ENCODE measurements at regions of chr12 and their contacts with region 1.

Region 1: DNA sequence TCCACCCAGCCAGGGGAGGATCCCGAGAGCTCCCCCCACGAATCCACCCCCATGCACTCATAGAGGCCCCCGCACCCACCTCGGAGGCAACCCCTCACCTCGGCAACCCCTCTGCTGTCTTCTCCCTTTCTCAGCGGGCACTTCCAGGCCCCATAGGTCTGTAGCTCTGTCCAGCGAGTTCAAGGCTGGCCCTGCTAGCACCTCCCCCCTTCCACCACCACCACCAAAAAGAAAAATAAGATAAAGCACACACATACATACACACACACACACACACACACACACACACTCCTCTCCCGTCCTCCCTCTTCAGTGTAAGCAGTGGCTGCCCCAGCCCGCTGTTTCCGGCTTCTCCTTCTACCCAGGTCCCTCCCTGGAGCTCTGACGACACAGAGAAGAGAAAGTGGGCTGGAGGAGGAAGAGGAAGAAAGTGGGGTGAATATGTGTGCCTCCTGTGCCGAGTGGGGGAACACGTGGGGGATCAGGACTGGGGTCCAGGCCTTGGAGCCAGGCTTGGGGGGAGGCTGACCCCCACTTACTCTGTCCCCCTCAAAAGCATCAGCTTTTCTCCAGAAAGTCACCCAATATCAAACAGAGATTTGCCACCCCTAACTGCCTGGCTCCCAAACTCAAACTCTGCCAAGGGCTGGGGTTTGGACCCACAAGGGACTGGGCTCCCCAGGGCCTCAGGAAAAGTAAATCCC is at the start of gene STAT6:
- DNase-seq: peak; percentile 53 to 94 (median 87)
- ATAC-seq: peak; percentile 77
- H3K4me3 ChIP-seq: peak within 1 kb of the TSS; percentile 75
- H3K4me3 Mint-ChIP-seq: peak within 1 kb of the TSS; percentile 89 to 100 (median 98)
- H3K27ac ChIP-seq: peak within 1 kb of the TSS; percentile 92
- H3K27ac Mint-ChIP-seq: peak within 1 kb of the TSS; percentile 93 to 100 (median 97)
- H3K4me1 ChIP-seq: peaks cover 12 to 26% of the 10 kb centered on the region in 2 donors
- H3K4me1 Mint-ChIP-seq: peaks cover 41 to 54% (median 46%) of the 10 kb centered on the region in 7 donors
- H3K27me3 ChIP-seq: no peaks in the 10 kb centered on the region
- H3K27me3 Mint-ChIP-seq: no peaks in the 10 kb centered on the region
- total RNA-seq, gene STAT6: 206 to 403 (median 294) TPM

Region 2: DNA sequence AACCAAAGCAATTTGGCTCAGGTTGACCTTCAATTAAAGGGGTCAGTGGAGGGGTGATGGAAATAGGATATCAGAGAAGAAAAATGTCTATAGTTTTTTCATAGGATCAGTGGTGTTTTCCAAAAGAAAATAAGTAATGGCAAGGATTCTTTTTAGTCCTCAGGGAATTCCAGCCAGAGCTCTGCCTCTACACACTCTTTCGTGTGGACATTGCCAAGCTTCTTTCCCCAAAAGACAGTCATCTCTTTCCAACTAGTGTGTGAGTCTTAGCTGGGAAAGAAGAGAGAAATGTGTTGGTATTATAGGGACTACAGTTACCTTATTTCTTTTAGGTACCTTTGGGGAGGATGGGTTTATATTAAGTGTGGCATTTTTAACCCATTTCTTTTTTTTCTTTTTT is 543.0 kb before region 1 on chr12:
- CTCF ChIA-PET with region 1: no interaction called
- POLR2A ChIA-PET with region 1: no interaction called
- intact Hi-C with region 1: no loop called
- DNase-seq: no peak
- ATAC-seq: no peak
- H3K4me3 ChIP-seq: no peak overlapping the region
- H3K4me3 Mint-ChIP-seq: no peak overlapping the region
- H3K27ac ChIP-seq: no peak overlapping the region
- H3K27ac Mint-ChIP-seq: no peak overlapping the region
- H3K4me1 ChIP-seq: peaks cover 8 to 31% of the 10 kb centered on the region in 2 donors
- H3K4me1 Mint-ChIP-seq: peaks cover 20 to 41% (median 34%) of the 10 kb centered on the region in 7 donors
- H3K27me3 ChIP-seq: no peaks in the 10 kb centered on the region
- H3K27me3 Mint-ChIP-seq: no peaks in the 10 kb centered on the region

Region 3: GRCh38 chr12:56724972-56725722 is 386.0 kb before region 1 on chr12 and contains the start of gene NACA:
- CTCF ChIA-PET with region 1: no interaction called
- POLR2A ChIA-PET with region 1: interaction called, 10 read pairs
- intact Hi-C with region 1: loop called (anchors 1 kb)
- DNase-seq: peak; percentile 85 to 99 (median 96)
- ATAC-seq: peak; percentile 95
- H3K4me3 ChIP-seq: peak within 1 kb of the TSS; percentile 100
- H3K4me3 Mint-ChIP-seq: peak within 1 kb of the TSS; percentile 94 to 100 (median 97)
- H3K27ac ChIP-seq: peak within 1 kb of the TSS; percentile 87
- H3K27ac Mint-ChIP-seq: peak within 1 kb of the TSS; percentile 94 to 100 (median 98)
- H3K4me1 ChIP-seq: peaks cover 40 to 43% of the 10 kb centered on the region in 2 donors
- H3K4me1 Mint-ChIP-seq: peaks cover 39 to 53% (median 49%) of the 10 kb centered on the region in 7 donors
- H3K27me3 ChIP-seq: no peaks in the 10 kb centered on the region
- H3K27me3 Mint-ChIP-seq: no peaks in the 10 kb centered on the region
- total RNA-seq, gene NACA: 834 to 1,486 (median 1,355) TPM

Region 4: DNA sequence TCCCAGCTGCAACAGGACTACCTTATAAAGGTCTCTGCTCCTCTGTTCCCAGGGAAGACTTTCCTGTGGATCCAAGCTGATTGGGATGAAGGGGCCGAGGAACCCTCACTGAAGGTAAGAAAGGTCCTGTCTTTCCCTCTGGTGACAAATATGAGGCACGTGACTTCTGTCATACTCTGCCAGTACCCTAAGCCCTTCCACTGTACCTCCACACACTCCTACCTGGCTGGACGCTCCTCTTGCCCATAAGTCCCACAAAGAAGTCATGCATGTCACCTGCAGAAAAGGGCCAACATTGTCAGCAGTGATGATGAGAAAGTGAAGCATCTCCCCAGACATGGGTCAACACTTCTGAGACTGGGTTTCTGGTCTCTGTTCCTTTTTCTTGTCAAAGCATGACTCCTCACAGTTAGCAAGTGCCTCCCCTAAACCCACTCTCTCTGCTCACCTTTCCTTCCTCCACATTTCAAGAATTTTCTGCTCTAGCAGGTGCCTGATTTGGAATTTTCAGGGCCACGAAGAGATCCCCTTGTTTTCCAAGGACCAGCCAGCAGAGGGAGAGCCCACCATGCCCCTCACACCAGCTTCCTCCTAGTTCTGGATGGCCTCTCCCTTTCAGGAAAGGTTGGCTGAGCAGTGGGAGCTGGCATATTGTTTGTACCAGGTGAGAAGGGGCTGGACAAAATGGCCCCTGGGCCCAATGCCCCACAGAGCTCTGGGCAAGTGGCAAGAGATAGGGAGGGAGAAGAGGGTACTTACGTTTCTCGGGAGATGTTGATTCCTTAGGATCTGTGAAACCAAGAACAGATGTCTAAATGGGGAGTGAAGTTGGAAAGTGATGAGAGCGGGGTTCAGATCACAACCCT is 98.3 kb before region 1 on chr12:
- CTCF ChIA-PET with region 1: interaction called, 52 read pairs
- POLR2A ChIA-PET with region 1: interaction called, 39 read pairs
- intact Hi-C with region 1: loop called (anchors 1 kb)
- DNase-seq: no peak
- ATAC-seq: no peak
- H3K4me3 ChIP-seq: no peak overlapping the region
- H3K4me3 Mint-ChIP-seq: peak overlapping the region in 3 of 10 donors; percentile 45 to 57 (median 48)
- H3K27ac ChIP-seq: no peak overlapping the region
- H3K27ac Mint-ChIP-seq: peak overlapping the region in 7 of 9 donors; percentile 14 to 95 (median 76)
- H3K4me1 ChIP-seq: peaks cover 5 to 35% of the 10 kb centered on the region in 2 donors
- H3K4me1 Mint-ChIP-seq: peaks cover 18 to 72% (median 55%) of the 10 kb centered on the region in 7 donors
- H3K27me3 ChIP-seq: no peaks in the 10 kb centered on the region
- H3K27me3 Mint-ChIP-seq: peaks cover 0 to 14% (median 0%) of the 10 kb centered on the region in 5 donors

Region 5: DNA sequence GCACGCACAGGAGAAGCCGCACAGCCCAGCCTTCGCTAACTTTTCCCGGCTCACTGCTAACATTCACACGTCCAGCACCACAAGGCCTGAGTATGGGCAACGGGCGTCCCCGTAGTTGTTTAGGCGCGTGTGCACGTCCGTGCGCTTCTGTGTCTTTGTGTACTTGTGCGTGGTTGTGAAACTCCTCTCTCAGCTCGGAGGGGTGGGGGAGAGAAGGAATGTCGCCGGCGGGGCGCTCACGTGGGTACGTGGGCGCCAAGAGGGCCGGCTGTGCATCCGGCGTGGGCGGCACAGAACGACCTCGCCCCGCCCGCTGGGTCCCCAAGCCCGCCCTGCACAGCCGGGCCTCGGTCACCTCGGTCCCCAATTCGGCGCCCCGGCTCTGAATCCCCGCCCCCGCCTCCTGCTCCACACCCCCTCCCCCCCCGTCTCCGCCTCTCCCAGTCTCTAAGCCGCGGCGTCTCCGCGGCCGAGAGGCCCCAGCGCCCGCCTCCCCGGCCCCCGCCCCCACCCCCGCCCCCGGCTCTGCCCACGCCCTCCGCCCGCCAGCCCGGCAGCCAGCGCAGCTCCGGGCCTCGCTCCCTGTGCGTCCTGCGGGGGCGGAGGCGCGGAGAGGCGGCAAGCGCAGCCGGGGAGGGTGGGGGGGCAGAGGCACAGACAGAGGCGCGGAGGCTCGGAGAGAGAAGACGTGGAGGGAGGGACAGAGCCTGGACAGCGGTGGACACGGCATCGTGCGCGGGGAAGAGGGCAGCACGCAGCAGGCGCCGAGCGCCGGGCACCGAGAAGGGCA is 22.5 kb before region 1 on chr12 and contains the start of gene NAB2:
- CTCF ChIA-PET with region 1: interaction called, 77 read pairs
- POLR2A ChIA-PET with region 1: interaction called, 401 read pairs
- intact Hi-C with region 1: loop called (anchors 1 kb)
- DNase-seq: peak; percentile 79 to 91 (median 88)
- ATAC-seq: peak; percentile 84
- H3K4me3 ChIP-seq: peak within 1 kb of the TSS; percentile 94
- H3K4me3 Mint-ChIP-seq: peak within 1 kb of the TSS; percentile 94 to 98 (median 96)
- H3K27ac ChIP-seq: peak within 1 kb of the TSS; percentile 100
- H3K27ac Mint-ChIP-seq: peak within 1 kb of the TSS; percentile 94 to 99 (median 97)
- H3K4me1 ChIP-seq: peaks cover 23 to 46% of the 10 kb centered on the region in 2 donors
- H3K4me1 Mint-ChIP-seq: peaks cover 40 to 68% (median 58%) of the 10 kb centered on the region in 7 donors
- H3K27me3 ChIP-seq: no peaks in the 10 kb centered on the region
- H3K27me3 Mint-ChIP-seq: no peaks in the 10 kb centered on the region
- total RNA-seq, gene NAB2: 5.7 to 22.4 (median 15.5) TPM

Region 6: DNA sequence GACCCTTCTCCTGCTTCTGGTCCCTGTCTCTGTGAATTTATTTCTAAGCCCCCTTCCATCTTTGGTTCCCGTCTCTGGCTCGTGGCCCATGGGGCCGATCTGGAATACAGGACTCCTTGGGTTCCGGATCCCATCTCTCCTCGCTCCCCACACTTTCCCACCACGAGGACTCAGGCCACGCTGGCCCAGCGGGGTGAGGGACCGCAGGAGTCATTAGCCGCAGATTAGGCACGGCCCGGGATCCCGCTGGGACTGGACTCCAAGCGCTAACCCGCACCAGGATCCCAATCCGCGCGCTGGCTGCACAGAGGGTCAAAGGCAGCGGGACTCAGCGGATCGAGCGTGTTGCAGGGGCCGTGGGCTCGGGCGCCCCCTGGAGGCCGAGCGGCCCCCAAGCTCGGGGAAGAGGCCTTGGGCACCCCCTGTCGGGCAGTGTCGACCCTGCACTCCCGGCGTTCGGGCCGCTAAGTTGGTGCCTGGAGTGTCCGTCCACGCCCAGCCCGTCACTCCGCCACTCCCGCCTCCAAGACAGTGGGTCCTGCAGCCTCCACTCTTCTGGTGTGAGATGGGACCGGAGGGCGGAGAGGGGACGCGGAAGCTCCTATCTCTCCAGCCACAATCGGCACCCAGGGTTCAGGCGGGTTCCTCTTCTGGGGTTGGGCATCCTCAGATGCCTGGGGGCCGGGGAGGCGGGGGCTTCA is 127.8 kb after region 1 on chr12:
- CTCF ChIA-PET with region 1: no interaction called
- POLR2A ChIA-PET with region 1: no interaction called
- intact Hi-C with region 1: loop called in 1 of 2 experiments (anchors 5 kb)
- DNase-seq: peak; percentile 72 to 94 (median 85)
- ATAC-seq: peak; percentile 89
- H3K4me3 ChIP-seq: peak overlapping the region; percentile 80
- H3K4me3 Mint-ChIP-seq: peak overlapping the region; percentile 87 to 99 (median 95)
- H3K27ac ChIP-seq: no peak overlapping the region
- H3K27ac Mint-ChIP-seq: peak overlapping the region in 6 of 9 donors; percentile 24 to 83 (median 64)
- H3K4me1 ChIP-seq: peaks cover 45 to 70% of the 10 kb centered on the region in 2 donors
- H3K4me1 Mint-ChIP-seq: peaks cover 52 to 82% (median 66%) of the 10 kb centered on the region in 7 donors
- H3K27me3 ChIP-seq: peaks cover 7 to 18% of the 10 kb centered on the region in 2 donors
- H3K27me3 Mint-ChIP-seq: peaks cover 48 to 72% (median 55%) of the 10 kb centered on the region in 5 donors

Region 7: DNA sequence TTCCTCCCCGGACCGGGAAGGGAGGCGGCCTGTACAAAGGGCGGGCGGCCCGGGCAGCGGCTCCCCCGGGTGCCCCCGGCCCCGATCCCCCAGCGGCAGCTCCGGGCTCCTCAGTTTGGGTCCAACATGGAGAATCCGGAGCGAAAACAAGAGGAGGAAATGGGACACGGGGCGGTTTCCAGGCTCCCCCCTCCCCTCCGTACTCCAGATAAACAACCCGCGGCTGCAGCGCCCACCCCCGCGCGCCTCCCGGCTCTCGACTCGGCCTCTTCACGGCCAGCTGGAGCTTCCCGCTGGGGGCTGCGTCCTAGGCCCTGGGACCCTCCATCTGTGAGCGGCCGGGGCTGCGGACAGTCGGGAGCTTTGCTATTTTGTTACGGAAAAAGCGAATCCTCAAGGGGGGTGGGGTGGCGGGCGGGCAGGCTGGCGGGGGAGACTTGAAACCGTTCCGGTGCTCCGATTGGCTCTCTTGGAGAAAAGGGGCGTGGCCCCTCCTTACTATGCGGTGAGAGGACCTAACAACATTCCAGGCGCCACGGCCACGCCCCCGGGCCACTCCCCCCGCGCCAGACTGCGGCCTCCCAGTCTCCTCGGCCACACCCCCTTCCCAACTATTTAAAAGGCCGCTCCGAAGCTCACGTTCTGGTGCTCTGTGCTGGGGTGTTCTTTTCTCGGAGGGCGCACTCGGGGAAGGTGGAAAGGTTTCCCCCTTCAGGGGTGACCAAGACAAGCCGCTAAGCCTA is 735.6 kb after region 1 on chr12 and contains the start of gene CTDSP2:
- CTCF ChIA-PET with region 1: no interaction called
- POLR2A ChIA-PET with region 1: no interaction called
- intact Hi-C with region 1: loop called in 1 of 2 experiments (anchors 2 kb)
- DNase-seq: peak; percentile 59 to 92 (median 82)
- ATAC-seq: peak; percentile 85
- H3K4me3 ChIP-seq: peak within 1 kb of the TSS; percentile 79
- H3K4me3 Mint-ChIP-seq: peak within 1 kb of the TSS; percentile 87 to 97 (median 92)
- H3K27ac ChIP-seq: peak within 1 kb of the TSS; percentile 89
- H3K27ac Mint-ChIP-seq: peak within 1 kb of the TSS; percentile 75 to 94 (median 89)
- H3K4me1 ChIP-seq: peaks cover 15 to 30% of the 10 kb centered on the region in 2 donors
- H3K4me1 Mint-ChIP-seq: peaks cover 48 to 57% (median 50%) of the 10 kb centered on the region in 7 donors
- H3K27me3 ChIP-seq: no peaks in the 10 kb centered on the region
- H3K27me3 Mint-ChIP-seq: peaks cover 0 to 39% (median 9%) of the 10 kb centered on the region in 5 donors
- total RNA-seq, gene CTDSP2: 124 to 295 (median 145) TPM

Measured in naive thymus-derived CD4-positive, alpha-beta T cell (primary cell).